Activated CD4-positive, alpha-beta T cell treated with anti-CD3 and anti-CD28 coated beads for 36 hours (primary cell): ENCODE measurements at regions of chr19 and their contacts with region 1.

Region 1: GRCh38 chr19:3762501-3763459 is at the start of gene MRPL54:
- DNase-seq: peak; percentile 100
- ATAC-seq: peak; percentile 88
- H3K4me3 Mint-ChIP-seq: peak within 1 kb of the TSS; percentile 100
- H3K27ac Mint-ChIP-seq: peak within 1 kb of the TSS; percentile 99
- H3K4me1 Mint-ChIP-seq: peaks cover 39% of the 10 kb centered on the region
- H3K27me3 Mint-ChIP-seq: no peaks in the 10 kb centered on the region
- total RNA-seq, gene MRPL54: 54.8 to 63.9 TPM

Region 2: DNA sequence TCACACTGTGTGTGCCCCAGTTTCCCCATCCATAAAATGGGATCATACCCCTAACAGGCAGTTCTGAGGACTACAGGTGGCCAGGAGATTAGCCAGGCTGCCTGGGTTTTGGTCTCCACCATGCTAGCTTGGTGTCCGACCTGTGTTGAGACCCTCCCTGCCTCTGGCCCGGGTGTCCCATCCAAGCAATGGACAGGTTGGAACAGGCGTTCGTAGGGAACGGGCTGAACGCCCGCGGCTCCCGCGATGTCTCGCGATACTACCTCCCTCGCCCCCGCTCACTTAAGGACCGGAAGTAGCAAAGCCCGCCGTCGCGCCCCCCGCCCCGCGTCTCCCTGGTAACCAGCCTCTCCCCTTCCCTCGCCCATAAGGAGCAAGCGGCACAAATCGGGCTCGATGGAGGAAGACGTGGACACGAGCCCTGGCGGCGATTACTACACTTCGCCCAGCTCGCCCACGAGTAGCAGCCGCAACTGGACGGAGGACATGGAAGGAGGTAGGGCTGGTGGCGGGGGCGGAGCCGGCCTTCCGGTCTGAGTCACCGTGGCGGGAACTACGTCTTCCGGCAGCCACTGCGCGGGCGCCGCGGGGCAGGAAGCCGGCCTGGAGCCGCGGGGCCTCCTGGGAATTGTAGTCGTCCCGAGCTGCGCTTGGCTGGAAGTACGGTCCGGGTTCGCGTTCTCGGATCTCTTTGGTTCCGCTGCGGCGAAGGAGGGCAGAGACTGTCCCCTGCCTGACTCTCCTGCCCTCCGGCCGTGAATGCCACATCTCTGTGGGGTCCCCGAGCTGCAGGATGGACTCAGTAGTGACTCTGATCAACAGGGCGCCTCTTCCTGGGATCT is 327.8 kb before region 1 on chr19:
- CTCF ChIA-PET with region 1: no interaction called
- POLR2A ChIA-PET with region 1: no interaction called
- intact Hi-C with region 1: loop called in 1 of 2 experiments (anchors 1 kb)
- DNase-seq: peak; percentile 98
- ATAC-seq: peak; percentile 96
- H3K4me3 Mint-ChIP-seq: peak overlapping the region; percentile 84
- H3K27ac Mint-ChIP-seq: peak overlapping the region; percentile 99
- H3K4me1 Mint-ChIP-seq: peaks cover 13% of the 10 kb centered on the region
- H3K27me3 Mint-ChIP-seq: no peaks in the 10 kb centered on the region

Region 3: DNA sequence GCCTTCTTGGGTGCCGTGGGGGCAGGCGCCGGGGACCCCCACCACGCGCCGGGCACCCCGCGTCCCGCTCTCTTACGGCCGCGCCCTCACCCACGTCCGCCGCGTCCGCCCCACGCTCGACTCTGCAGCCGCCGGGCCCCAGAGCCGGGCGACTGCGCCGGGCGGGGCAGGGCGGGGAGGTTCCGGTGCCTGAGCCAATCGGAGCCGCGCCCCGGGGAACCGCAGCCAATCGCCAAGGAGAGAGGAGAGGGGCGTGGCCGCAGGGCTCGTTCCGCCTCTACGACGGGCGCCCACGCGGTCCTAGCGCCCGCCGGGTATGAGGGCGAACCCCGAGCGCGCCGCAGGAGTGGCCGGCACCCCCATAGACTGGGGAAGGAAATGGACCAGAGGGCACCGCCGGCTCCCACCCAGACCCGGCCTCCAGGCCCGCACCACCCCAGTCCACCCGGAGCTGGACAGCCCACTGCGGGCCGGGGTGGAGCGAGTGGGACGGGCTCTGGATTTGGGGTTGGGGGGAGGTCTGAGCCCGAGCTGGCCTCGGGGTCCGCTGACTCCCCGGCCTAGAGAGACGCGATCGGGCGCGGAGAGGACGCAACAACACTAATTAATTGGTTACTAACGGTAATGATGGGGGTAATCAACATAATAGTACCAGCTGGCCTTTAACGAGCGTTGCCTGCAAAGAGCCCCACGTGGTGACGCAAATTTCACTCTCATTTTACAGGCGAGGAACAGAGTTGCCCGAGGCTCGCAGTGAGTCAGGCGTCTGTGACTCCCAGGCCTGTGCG is 205.1 kb before region 1 on chr19 and contains the start of gene MFSD12:
- CTCF ChIA-PET with region 1: no interaction called
- POLR2A ChIA-PET with region 1: no interaction called
- intact Hi-C with region 1: loop called in 1 of 2 experiments (anchors 1 kb)
- DNase-seq: peak; percentile 97
- ATAC-seq: peak; percentile 89
- H3K4me3 Mint-ChIP-seq: peak within 1 kb of the TSS; percentile 96
- H3K27ac Mint-ChIP-seq: peak within 1 kb of the TSS; percentile 92
- H3K4me1 Mint-ChIP-seq: peaks cover 36% of the 10 kb centered on the region
- H3K27me3 Mint-ChIP-seq: no peaks in the 10 kb centered on the region
- total RNA-seq, gene MFSD12: 44.7 to 46.7 TPM

Region 4: DNA sequence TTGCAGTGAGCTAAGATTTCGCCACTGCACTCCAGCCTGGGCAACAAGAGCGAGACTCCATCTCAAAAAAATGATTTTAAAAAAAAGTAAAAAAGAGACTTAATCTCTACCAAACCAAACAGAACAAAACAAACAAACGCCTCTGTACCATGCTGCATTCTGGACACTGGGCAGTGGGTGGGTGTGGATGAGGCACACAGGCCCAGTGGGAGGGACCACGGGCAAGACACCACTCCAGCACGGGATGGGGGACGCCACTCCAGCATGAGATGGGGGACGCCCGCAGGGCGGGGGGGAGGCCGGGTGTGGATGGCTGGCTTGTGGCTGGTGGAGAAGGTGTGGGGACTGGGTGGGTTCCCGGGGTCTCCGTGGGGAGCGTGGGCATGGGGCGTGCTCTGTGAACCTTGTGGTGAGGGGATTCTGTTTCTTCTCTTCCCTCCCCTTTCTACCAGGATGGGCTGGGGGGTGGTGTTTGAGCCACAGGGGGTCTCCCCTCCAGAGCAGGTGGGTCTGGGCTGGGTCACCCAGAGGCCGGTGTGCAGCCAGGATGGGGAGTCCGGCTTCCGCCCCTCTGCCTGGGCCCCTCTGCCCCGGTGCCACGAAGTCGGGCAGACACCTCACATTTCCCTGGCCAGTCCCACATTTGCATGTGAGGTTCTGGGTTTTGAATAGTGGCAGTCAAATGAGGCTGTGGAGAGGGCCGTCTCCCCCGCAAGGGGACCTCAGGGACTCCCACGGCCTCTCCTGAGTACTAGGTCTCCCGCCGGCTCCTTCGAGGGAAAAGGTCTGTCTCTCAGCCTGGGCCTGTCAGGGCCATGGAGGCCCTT is 47.3 kb after region 1 on chr19:
- CTCF ChIA-PET with region 1: interaction called, 7 read pairs
- POLR2A ChIA-PET with region 1: interaction called, 6 read pairs
- intact Hi-C with region 1: loop called (anchors 1 to 2 kb)
- DNase-seq: no peak
- ATAC-seq: no peak
- H3K4me3 Mint-ChIP-seq: no peak overlapping the region
- H3K27ac Mint-ChIP-seq: no peak overlapping the region
- H3K4me1 Mint-ChIP-seq: peaks cover 38% of the 10 kb centered on the region
- H3K27me3 Mint-ChIP-seq: no peaks in the 10 kb centered on the region

Region 5: GRCh38 chr19:3868770-3869456 is 106.1 kb after region 1 on chr19 and contains the start of gene ZFR2:
- CTCF ChIA-PET with region 1: no interaction called
- POLR2A ChIA-PET with region 1: no interaction called
- intact Hi-C with region 1: no loop called
- DNase-seq: peak; percentile 54
- ATAC-seq: peak; percentile 39
- H3K4me3 Mint-ChIP-seq: no peak within 1 kb of the TSS
- H3K27ac Mint-ChIP-seq: no peak within 1 kb of the TSS
- H3K4me1 Mint-ChIP-seq: peaks cover 10% of the 10 kb centered on the region
- H3K27me3 Mint-ChIP-seq: peaks cover 35% of the 10 kb centered on the region
- total RNA-seq, gene ZFR2: 0.23 to 0.51 TPM

Region 6: GRCh38 chr19:3970808-3971598 is 208.2 kb after region 1 on chr19 and contains the start of gene DAPK3:
- CTCF ChIA-PET with region 1: no interaction called
- POLR2A ChIA-PET with region 1: interaction called, 4 read pairs
- intact Hi-C with region 1: loop called in 1 of 2 experiments (anchors 1 kb)
- DNase-seq: peak; percentile 97
- ATAC-seq: peak; percentile 95
- H3K4me3 Mint-ChIP-seq: peak within 1 kb of the TSS; percentile 83
- H3K27ac Mint-ChIP-seq: peak within 1 kb of the TSS; percentile 58
- H3K4me1 Mint-ChIP-seq: peaks cover 22% of the 10 kb centered on the region
- H3K27me3 Mint-ChIP-seq: no peaks in the 10 kb centered on the region
- total RNA-seq, gene DAPK3: 26.7 to 27.6 TPM

Region 7: GRCh38 chr19:4007021-4007835 is 244.4 kb after region 1 on chr19 and contains the start of gene PIAS4:
- CTCF ChIA-PET with region 1: no interaction called
- POLR2A ChIA-PET with region 1: no interaction called
- intact Hi-C with region 1: loop called in 1 of 2 experiments (anchors 1 kb)
- DNase-seq: peak; percentile 97
- ATAC-seq: peak; percentile 92
- H3K4me3 Mint-ChIP-seq: peak within 1 kb of the TSS; percentile 75
- H3K27ac Mint-ChIP-seq: peak within 1 kb of the TSS; percentile 71
- H3K4me1 Mint-ChIP-seq: peaks cover 27% of the 10 kb centered on the region
- H3K27me3 Mint-ChIP-seq: no peaks in the 10 kb centered on the region
- total RNA-seq, gene PIAS4: 23.0 to 37.3 TPM

Region 8: DNA sequence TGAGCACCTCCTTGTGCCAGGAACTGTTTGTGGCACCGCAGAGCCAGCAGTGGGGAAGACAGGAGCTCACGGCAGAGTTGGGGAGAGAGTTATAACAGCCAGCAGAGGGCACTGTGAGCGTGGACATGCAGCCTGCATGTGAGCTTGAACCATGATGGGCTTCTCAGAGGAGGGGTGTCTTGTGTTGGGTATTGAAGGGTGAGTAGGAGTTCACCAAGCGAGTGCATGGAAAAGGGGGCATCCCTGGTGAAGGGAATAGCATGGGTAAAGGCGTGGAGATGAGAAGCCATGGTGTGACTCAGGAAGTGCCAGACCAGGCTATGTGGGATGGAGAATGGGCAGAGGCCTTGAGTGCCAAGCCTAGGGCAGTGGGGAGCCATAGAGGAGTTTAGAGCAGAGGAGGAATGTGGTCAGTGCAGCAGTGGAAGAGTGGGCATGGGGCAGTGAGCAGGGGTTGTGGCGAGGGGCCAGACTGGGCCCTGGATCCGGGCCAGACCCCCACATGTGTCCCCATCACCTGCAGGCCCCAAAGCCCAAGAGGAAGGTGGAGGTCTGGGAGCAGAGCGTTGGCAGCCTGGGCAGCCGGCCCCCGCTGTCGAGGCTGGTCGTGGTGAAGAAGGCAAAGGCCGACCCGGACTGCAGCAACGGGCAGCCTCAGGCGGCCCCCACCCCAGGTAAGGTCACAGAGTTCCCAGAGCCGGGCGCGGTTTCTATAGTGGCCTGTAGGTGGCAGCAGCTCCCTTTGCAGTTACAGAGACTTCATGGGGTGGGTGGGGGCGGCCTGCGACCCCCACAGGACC is 504.5 kb after region 1 on chr19:
- CTCF ChIA-PET with region 1: no interaction called
- POLR2A ChIA-PET with region 1: no interaction called
- intact Hi-C with region 1: no loop called
- DNase-seq: peak; percentile 83
- ATAC-seq: peak; percentile 81
- H3K4me3 Mint-ChIP-seq: no peak overlapping the region
- H3K27ac Mint-ChIP-seq: peak overlapping the region; percentile 9
- H3K4me1 Mint-ChIP-seq: peaks cover 14% of the 10 kb centered on the region
- H3K27me3 Mint-ChIP-seq: no peaks in the 10 kb centered on the region

Region 9: DNA sequence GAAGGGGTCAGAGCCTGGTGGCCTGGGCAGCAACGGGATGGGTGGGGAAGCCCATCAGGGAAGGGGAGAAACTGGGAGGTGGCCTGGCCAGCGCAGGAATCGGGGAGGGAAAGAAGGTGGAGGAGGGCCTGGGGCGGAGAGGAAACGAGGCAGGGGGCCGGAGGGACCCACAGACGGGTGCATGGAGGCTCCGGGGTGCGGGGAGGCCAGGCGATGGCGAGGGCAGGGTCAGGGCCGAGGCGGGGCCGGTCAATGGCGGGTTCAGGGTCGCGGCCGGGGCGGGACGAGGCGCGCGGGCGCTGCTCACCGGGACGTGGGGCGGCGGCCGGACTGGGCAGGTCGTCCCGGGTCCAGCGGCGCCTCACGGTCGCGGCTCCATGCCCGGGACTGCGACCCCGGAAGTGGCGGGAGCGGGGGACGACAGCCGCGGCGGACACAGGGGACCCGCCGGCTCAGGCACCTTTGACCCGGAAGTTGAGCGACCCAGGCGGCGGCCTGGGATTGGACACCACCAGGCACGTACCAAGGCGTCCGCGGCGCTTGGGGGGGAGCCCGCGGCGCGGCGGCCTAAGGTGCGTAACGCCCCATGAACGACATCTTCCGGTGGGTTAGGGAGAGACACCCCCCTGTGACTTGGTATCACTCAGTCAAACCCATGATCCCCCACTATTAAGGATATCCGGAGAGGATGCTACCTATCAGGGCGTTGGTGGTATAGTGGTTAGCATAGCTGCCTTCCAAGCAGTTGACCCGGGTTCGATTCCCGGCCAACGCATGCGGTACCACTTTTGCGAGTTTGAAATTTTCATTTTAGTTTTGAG is 960.8 kb after region 1 on chr19 and contains the start of gene DPP9:
- CTCF ChIA-PET with region 1: no interaction called
- POLR2A ChIA-PET with region 1: no interaction called
- intact Hi-C with region 1: loop called in 1 of 2 experiments (anchors 5 kb)
- DNase-seq: peak; percentile 98
- ATAC-seq: peak; percentile 95
- H3K4me3 Mint-ChIP-seq: peak within 1 kb of the TSS; percentile 92
- H3K27ac Mint-ChIP-seq: peak within 1 kb of the TSS; percentile 93
- H3K4me1 Mint-ChIP-seq: peaks cover 26% of the 10 kb centered on the region
- H3K27me3 Mint-ChIP-seq: no peaks in the 10 kb centered on the region
- total RNA-seq, gene DPP9: 49.2 to 51.3 TPM